PC-9 (cell line): ENCODE measurements at regions of chr10 and their contacts with region 1.

Region 1: GRCh38 chr10:62323751-62324150 is 50.4 kb upstream of the ZNF365 start:
- DNase-seq: peak; percentile 47 to 95
- H3K4me3 ChIP-seq: no peak overlapping the region
- H3K27ac ChIP-seq: peak overlapping the region; percentile 15; the same call in 1 of the 2 replicates
- H3K4me1 ChIP-seq: peaks cover 11% of the 10 kb centered on the region
- H3K27me3 ChIP-seq: no peaks in the 10 kb centered on the region
- CTCF ChIP-seq: no peak

Region 2: GRCh38 chr10:62095181-62096071 is 228.3 kb before region 1 on chr10:
- CTCF ChIA-PET with region 1: no interaction called
- POLR2A ChIA-PET with region 1: no interaction called
- intact Hi-C with region 1: loop called (anchors 10 kb)
- DNase-seq: peak in 1 of 2 experiments; percentile 56
- H3K4me3 ChIP-seq: 0 out of 2 replicates have a peak overlapping the region, but pooled peaks have one; percentile 1
- H3K27ac ChIP-seq: peak overlapping the region; percentile 62
- H3K4me1 ChIP-seq: peaks cover 53% of the 10 kb centered on the region
- H3K27me3 ChIP-seq: no peaks in the 10 kb centered on the region
- CTCF ChIP-seq: no peak

Region 3: GRCh38 chr10:62268399-62269114 is 55.2 kb before region 1 on chr10 and contains the start of gene RTKN2:
- CTCF ChIA-PET with region 1: no interaction called
- POLR2A ChIA-PET with region 1: interaction called, 5 read pairs
- intact Hi-C with region 1: loop called (anchors 5 kb)
- DNase-seq: peak; percentile 90 to 96
- H3K4me3 ChIP-seq: peak within 1 kb of the TSS; percentile 95
- H3K27ac ChIP-seq: peak within 1 kb of the TSS; percentile 54
- H3K4me1 ChIP-seq: peaks cover 33% of the 10 kb centered on the region
- H3K27me3 ChIP-seq: no peaks in the 10 kb centered on the region
- CTCF ChIP-seq: no peak
- total RNA-seq, gene RTKN2: 16.1 and 18.5 TPM in 2 replicates

Region 4: GRCh38 chr10:62297857-62298256 is 25.9 kb before region 1 on chr10:
- CTCF ChIA-PET with region 1: no interaction called
- POLR2A ChIA-PET with region 1: no interaction called
- intact Hi-C with region 1: loop called (anchors 2 kb)
- DNase-seq: no peak
- H3K4me3 ChIP-seq: no peak overlapping the region
- H3K27ac ChIP-seq: no peak overlapping the region
- H3K4me1 ChIP-seq: no peaks in the 10 kb centered on the region
- H3K27me3 ChIP-seq: no peaks in the 10 kb centered on the region
- CTCF ChIP-seq: no peak